Panc1 (cell line): ENCODE measurements at regions of chr13 and their contacts with region 1.

Region 1: GRCh38 chr13:77343841-77344240 is 16.9 kb upstream of the MYCBP2 start:
- DNase-seq: no peak
- ATAC-seq: no peak
- H3K4me3 ChIP-seq: no peak overlapping the region
- H3K27ac ChIP-seq: no peak overlapping the region
- H3K4me1 ChIP-seq: no peaks in the 10 kb centered on the region; the same call in 1 of the 2 replicates
- H3K27me3 ChIP-seq: no peaks in the 10 kb centered on the region
- CTCF ChIP-seq: no peak

Region 2: GRCh38 chr13:77379508-77379907 is 35.7 kb after region 1 on chr13:
- CTCF ChIA-PET with region 1: no interaction called
- POLR2A ChIA-PET with region 1: no interaction called
- in situ Hi-C with region 1: no loop called
- intact Hi-C with region 1: loop called (anchors 1 kb)
- DNase-seq: no peak
- ATAC-seq: no peak
- H3K4me3 ChIP-seq: no peak overlapping the region
- H3K27ac ChIP-seq: no peak overlapping the region
- H3K4me1 ChIP-seq: no peaks in the 10 kb centered on the region
- H3K27me3 ChIP-seq: no peaks in the 10 kb centered on the region
- CTCF ChIP-seq: no peak